ENCODE measurements at regions of chr4 and their contacts with region 1.

Region 1: GRCh38 chr4:70778888-70779422 is 57.2 kb downstream of the RUFY3 start:
- H3K4me3 Mint-ChIP-seq: no peak overlapping the region
- H3K27ac Mint-ChIP-seq: no peak overlapping the region
- H3K4me1 Mint-ChIP-seq: no peaks in the 10 kb centered on the region
- H3K27me3 Mint-ChIP-seq: no peaks in the 10 kb centered on the region

Region 2: GRCh38 chr4:70704331-70705145 is 74.4 kb before region 1 on chr4:
- intact Hi-C with region 1: loop called (anchors 10 kb)
- H3K4me3 Mint-ChIP-seq: peak overlapping the region; percentile 86
- H3K27ac Mint-ChIP-seq: peak overlapping the region; percentile 92
- H3K4me1 Mint-ChIP-seq: peaks cover 16% of the 10 kb centered on the region
- H3K27me3 Mint-ChIP-seq: no peaks in the 10 kb centered on the region

Measured in dendritic cell treated with granulocyte-macrophage colony-stimulating factor and Interleukin-4, amounts not matched to agents 40 ng/mL and 50 ng/mL, for 4 days (primary cell).